K562 (cell line): ENCODE measurements at regions of chr6 and their contacts with region 1.

Region 1: DNA sequence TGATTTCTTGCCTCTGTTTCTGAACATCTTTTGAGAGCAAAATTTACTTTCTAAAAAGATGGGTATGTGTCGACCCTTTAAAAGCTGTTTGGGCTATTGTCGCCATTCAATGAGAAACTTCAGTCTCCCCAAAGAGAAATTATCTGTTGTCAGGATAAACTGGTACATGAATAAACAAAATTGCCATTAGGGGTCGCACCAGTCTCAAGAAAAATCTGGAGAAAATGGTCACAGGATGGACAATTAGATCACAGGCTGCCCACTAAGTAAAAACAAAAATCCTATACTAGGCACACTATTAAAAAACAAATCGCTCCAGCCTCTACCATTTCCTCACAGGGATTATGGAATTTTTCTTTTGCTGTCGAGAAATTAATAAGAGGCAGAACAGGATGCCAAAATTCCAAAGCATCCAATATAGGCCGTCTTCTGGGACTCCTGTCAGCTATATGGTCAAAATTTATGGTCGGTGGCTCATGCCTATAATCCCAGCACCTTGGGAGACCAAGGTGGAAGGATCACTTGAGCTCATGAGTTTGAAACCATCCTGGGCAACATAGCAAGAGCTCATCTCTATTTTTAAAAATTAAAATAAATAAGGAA is 5.5 kb upstream of the HLA-E start:
- DNase-seq: peak in 3 of 4 experiments; percentile 29 to 83 (median 62)
- ATAC-seq: peak; percentile 56; the same call in 2 of the 3 replicates
- H3K4me3 ChIP-seq: no peak overlapping the region
- H3K27ac ChIP-seq: no peak overlapping the region
- H3K4me1 ChIP-seq: peaks cover 2 to 11% of the 10 kb centered on the region in 2 experiments; a peak in 3 of 5 replicates
- H3K27me3 ChIP-seq: peaks cover 19 to 26% of the 10 kb centered on the region in 2 experiments
- CTCF ChIP-seq: peak; percentile 75 to 90 (median 77)
- EP300 ChIP-seq: no peak
- POLR2A ChIP-seq: no peak
- RAD21 ChIP-seq: peak; percentile 88 to 89

Region 2: DNA sequence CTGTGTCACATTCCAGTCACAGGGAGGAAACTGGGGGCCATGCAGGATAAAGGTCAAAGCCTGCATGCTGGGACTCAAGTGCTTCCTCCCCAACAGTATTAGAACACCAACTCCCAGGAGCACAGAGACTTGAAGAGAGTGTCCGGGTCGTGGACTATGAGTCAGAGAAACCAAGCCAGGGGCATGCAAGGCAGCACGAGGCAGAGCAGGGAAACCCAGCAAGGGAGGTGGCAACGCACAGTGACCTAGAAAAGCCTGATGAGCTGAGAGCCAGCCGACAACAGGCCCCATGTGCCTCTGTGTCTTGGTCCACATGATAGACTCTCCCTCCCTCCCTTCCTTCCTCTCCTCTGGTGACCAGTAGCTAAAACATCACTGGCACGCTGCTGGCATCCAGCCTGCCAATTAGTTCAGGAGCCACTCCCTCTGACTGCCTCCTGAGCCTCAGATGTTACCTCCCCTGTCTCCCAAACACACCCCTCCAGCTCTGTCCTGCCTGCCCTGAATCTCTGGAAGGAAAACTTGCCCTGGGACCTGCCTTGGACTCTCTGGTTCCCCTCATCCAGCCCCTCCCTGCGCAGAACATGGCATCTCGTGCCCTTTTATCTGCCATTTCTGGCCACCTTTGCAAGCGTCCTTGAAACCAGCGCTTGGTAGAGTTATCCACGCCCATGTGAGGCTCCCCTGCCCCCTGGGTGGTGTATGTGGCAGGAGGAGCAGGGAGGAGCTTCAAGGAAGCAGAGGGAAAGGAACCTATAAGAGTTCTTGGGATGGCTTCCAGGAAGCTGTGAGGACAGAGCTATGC is 392.0 kb before region 1 on chr6:
- CTCF ChIA-PET with region 1: no interaction called
- POLR2A ChIA-PET with region 1: no interaction called
- in situ Hi-C with region 1: no loop called
- intact Hi-C with region 1: no loop called
- DNase-seq: no peak
- ATAC-seq: no peak; the same call in 2 of the 3 replicates
- H3K4me3 ChIP-seq: no peak overlapping the region
- H3K27ac ChIP-seq: no peak overlapping the region
- H3K4me1 ChIP-seq: peaks cover 0 to 6% of the 10 kb centered on the region in 2 experiments; a peak in 2 of 5 replicates
- H3K27me3 ChIP-seq: peaks cover 21 to 24% of the 10 kb centered on the region in 2 experiments; a peak in 4 of 5 replicates
- CTCF ChIP-seq: no peak
- EP300 ChIP-seq: no peak
- POLR2A ChIP-seq: no peak
- RAD21 ChIP-seq: no peak

Region 3: GRCh38 chr6:30541515-30542403 is 58.0 kb after region 1 on chr6:
- CTCF ChIA-PET with region 1: interaction called, 63 read pairs
- POLR2A ChIA-PET with region 1: interaction called, 4 read pairs
- in situ Hi-C with region 1: no loop called
- intact Hi-C with region 1: loop called (anchors 1 kb)
- DNase-seq: peak; percentile 85 to 92 (median 90)
- ATAC-seq: peak; percentile 94
- H3K4me3 ChIP-seq: peak overlapping the region; percentile 32
- H3K27ac ChIP-seq: no peak overlapping the region
- H3K4me1 ChIP-seq: peaks cover 0 to 2% of the 10 kb centered on the region in 2 experiments; a peak in 2 of 5 replicates
- H3K27me3 ChIP-seq: no peaks in the 10 kb centered on the region
- CTCF ChIP-seq: peak; percentile 95 to 100 (median 98)
- EP300 ChIP-seq: no peak
- POLR2A ChIP-seq: peak; percentile 43
- RAD21 ChIP-seq: peak; percentile 87 to 91

Region 4: GRCh38 chr6:30672445-30673253 is 188.9 kb after region 1 on chr6 and contains the start of gene DHX16:
- CTCF ChIA-PET with region 1: interaction called, 6 read pairs
- POLR2A ChIA-PET with region 1: no interaction called
- in situ Hi-C with region 1: loop called (anchors 5 kb)
- intact Hi-C with region 1: loop called (anchors 2 kb)
- DNase-seq: peak; percentile 85 to 99 (median 90)
- ATAC-seq: peak; percentile 89
- H3K4me3 ChIP-seq: peak within 1 kb of the TSS; percentile 83
- H3K27ac ChIP-seq: peak within 1 kb of the TSS; percentile 60
- H3K4me1 ChIP-seq: peaks cover 7 to 27% of the 10 kb centered on the region in 2 experiments
- H3K27me3 ChIP-seq: no peaks in the 10 kb centered on the region
- CTCF ChIP-seq: peak; percentile 85 to 98 (median 97)
- EP300 ChIP-seq: peak; percentile 58; the same call in 1 of the 2 replicates
- POLR2A ChIP-seq: peak; percentile 81
- RAD21 ChIP-seq: peak; percentile 76 to 77
- polyA plus RNA-seq, gene DHX16: 14.6 to 15.3 TPM

Region 5: DNA sequence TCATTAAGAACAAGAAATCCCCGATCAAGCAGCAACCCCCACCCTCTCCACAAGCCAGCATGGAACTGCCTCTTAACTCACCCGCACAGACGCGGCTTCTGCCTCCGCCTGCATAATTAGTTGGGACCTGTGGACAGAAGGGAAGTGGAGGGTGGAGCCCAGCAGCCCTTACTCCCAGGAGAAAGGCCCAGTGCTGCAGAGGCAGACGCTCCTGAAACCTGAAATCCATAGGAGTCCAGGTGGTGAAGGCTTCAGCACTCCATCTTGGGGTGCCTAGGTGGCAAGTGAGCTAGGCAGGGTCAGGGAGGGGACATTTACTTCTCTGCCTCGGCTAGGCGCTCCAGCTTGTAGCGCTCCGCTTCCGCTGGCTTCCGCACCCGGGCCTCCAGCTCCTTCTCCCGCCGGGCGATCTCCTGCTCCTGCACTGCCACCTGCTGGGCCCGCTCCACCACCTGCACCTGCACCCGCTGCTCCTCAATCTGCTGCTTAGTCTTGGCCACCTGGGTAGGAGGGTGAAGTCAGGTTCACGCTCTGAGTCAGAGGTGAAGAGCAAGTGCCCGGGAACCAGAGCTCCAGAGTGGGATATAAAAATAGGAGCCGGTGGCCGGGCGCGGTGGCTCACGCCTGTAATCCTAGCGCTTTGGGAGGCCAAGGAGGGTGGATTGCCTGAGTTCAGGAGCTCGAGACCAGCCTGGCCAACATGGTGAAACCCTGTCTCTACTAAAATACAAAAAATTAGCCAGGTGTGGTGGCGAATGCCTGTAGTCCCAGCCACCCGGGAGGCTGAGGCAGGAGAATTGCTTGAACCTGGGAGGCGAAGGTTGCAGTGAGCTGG is 247.0 kb after region 1 on chr6:
- CTCF ChIA-PET with region 1: interaction called, 3 read pairs
- POLR2A ChIA-PET with region 1: no interaction called
- in situ Hi-C with region 1: no loop called
- intact Hi-C with region 1: loop called (anchors 2 kb)
- DNase-seq: peak; percentile 79 to 86 (median 84)
- ATAC-seq: peak; percentile 90
- H3K4me3 ChIP-seq: no peak overlapping the region
- H3K27ac ChIP-seq: 0 out of 3 replicates have a peak overlapping the region, but pooled peaks have one; percentile 18
- H3K4me1 ChIP-seq: peaks cover 0 to 7% of the 10 kb centered on the region in 2 experiments; a peak in 3 of 5 replicates
- H3K27me3 ChIP-seq: no peaks in the 10 kb centered on the region
- CTCF ChIP-seq: peak; percentile 88 to 95 (median 90)
- EP300 ChIP-seq: no peak
- POLR2A ChIP-seq: no peak; the same call in 1 of the 2 replicates
- RAD21 ChIP-seq: peak; percentile 69 to 90

Region 6: DNA sequence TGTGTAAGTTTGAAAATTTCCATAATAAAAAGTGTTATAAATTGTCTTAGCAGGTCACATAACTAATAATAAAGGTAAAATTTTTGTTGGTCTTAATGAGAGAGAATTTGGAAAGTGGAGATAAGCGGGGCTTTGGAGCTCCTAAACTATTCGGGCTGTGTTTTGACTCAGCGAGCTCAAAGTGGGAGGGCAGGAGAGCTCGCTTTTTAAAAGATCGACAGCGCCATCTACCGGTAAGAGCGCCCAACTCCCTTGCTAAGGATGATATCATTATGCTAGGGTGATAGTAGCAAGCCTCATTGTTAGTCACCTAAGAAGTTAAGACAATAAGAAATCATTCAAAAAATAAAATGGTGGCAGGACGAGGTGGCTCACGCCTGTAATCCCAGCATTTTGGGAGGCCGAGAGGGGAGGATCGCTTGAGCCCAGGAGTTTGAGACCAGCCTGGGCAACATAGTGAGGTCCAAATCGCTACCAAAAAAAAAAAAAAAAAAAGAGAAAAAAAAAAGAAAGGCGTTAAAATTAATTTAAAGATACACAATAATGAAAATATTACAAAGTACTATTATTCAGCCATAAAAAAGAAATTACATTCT is 603.8 kb after region 1 on chr6:
- CTCF ChIA-PET with region 1: interaction called, 4 read pairs
- POLR2A ChIA-PET with region 1: interaction called, 3 read pairs
- in situ Hi-C with region 1: loop called (anchors 5 kb)
- intact Hi-C with region 1: loop called (anchors 5 kb)
- DNase-seq: peak; percentile 87 to 93 (median 88)
- ATAC-seq: peak; percentile 94
- H3K4me3 ChIP-seq: no peak overlapping the region
- H3K27ac ChIP-seq: no peak overlapping the region
- H3K4me1 ChIP-seq: peaks cover 8 to 20% of the 10 kb centered on the region in 2 experiments
- H3K27me3 ChIP-seq: no peaks in the 10 kb centered on the region; a peak in 1 of 5 replicates
- CTCF ChIP-seq: peak; percentile 80 to 93 (median 90)
- EP300 ChIP-seq: no peak
- POLR2A ChIP-seq: no peak
- RAD21 ChIP-seq: peak; percentile 83 to 88